ENCODE measurements at regions of chr18 and their contacts with region 1.

Region 1: GRCh38 chr18:623761-624620 is 27.2 kb downstream of the CLUL1 start:
- DNase-seq: peak; percentile 85
- ATAC-seq: peak; percentile 99
- H3K4me3 ChIP-seq: no peak overlapping the region
- H3K27ac ChIP-seq: no peak overlapping the region
- H3K4me1 ChIP-seq: no peaks in the 10 kb centered on the region
- H3K27me3 ChIP-seq: peaks cover 23% of the 10 kb centered on the region; the same call in 1 of the 2 replicates
- CTCF ChIP-seq: peak; percentile 62

Region 2: DNA sequence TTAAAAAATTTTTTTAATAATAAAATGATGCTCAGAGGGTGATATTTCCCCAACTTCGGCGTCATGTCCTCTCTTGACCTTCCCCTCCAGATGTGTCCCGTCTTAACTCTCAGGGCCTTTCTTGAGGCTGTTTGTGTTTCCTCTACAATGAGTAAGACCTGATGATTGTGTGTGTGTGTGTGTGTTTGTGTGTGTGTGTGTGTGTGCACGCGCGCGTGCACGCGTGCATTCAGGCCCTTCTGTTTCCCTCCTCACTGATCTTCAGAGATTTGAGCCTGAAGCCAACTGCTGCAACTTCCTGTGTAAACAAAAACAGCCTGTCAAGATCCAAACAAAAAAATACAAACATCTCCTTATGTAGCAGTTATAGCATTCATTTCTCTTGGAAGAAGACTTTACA is 67.9 kb before region 1 on chr18:
- CTCF ChIA-PET with region 1: no interaction called
- POLR2A ChIA-PET with region 1: no interaction called
- intact Hi-C with region 1: no loop called
- DNase-seq: no peak
- ATAC-seq: no peak
- H3K4me3 ChIP-seq: no peak overlapping the region
- H3K27ac ChIP-seq: no peak overlapping the region
- H3K4me1 ChIP-seq: no peaks in the 10 kb centered on the region
- H3K27me3 ChIP-seq: peaks cover 21% of the 10 kb centered on the region; the same call in 1 of the 2 replicates
- CTCF ChIP-seq: no peak

Region 3: GRCh38 chr18:652131-652530 is 28.1 kb after region 1 on chr18:
- CTCF ChIA-PET with region 1: interaction called, 12 read pairs
- POLR2A ChIA-PET with region 1: interaction called, 4 read pairs
- intact Hi-C with region 1: loop called (anchors 2 kb)
- DNase-seq: no peak
- ATAC-seq: no peak
- H3K4me3 ChIP-seq: no peak overlapping the region
- H3K27ac ChIP-seq: no peak overlapping the region
- H3K4me1 ChIP-seq: peaks cover 25% of the 10 kb centered on the region
- H3K27me3 ChIP-seq: no peaks in the 10 kb centered on the region
- CTCF ChIP-seq: no peak

Region 4: GRCh38 chr18:703213-703967 is 79.4 kb after region 1 on chr18:
- CTCF ChIA-PET with region 1: interaction called, 13 read pairs
- POLR2A ChIA-PET with region 1: no interaction called
- intact Hi-C with region 1: no loop called
- DNase-seq: peak; percentile 92
- ATAC-seq: peak; percentile 93
- H3K4me3 ChIP-seq: peak overlapping the region; percentile 53
- H3K27ac ChIP-seq: peak overlapping the region; percentile 99
- H3K4me1 ChIP-seq: peaks cover 42% of the 10 kb centered on the region
- H3K27me3 ChIP-seq: no peaks in the 10 kb centered on the region
- CTCF ChIP-seq: no peak

Region 5: DNA sequence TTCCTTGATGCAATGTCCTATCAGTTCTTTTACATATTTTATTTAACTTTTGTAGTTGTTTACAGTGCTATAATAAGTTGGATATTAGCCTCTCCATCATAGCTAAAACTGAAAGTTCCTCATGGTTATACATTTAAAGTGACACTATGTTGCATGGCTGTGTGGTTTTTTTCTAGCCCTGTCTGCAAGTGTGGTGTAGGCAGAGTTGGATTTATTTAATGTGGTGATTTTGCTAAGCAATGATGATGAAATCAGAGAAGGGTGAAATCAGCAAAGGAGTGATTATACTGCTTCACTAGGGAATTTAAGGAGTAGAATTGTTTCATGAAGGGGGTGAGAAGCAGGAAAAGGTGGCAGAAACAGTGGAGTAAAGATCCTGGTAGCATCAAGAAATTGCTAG is 106.7 kb after region 1 on chr18:
- CTCF ChIA-PET with region 1: no interaction called
- POLR2A ChIA-PET with region 1: no interaction called
- intact Hi-C with region 1: loop called (anchors 1 kb)
- DNase-seq: no peak
- ATAC-seq: no peak
- H3K4me3 ChIP-seq: no peak overlapping the region
- H3K27ac ChIP-seq: no peak overlapping the region
- H3K4me1 ChIP-seq: no peaks in the 10 kb centered on the region
- H3K27me3 ChIP-seq: no peaks in the 10 kb centered on the region
- CTCF ChIP-seq: no peak

Region 6: GRCh38 chr18:839224-840022 is 215.4 kb after region 1 on chr18:
- CTCF ChIA-PET with region 1: interaction called, 23 read pairs
- POLR2A ChIA-PET with region 1: no interaction called
- intact Hi-C with region 1: loop called (anchors 1 kb)
- DNase-seq: peak; percentile 93
- ATAC-seq: peak; percentile 92
- H3K4me3 ChIP-seq: no peak overlapping the region
- H3K27ac ChIP-seq: no peak overlapping the region
- H3K4me1 ChIP-seq: peaks cover 11% of the 10 kb centered on the region
- H3K27me3 ChIP-seq: no peaks in the 10 kb centered on the region
- CTCF ChIP-seq: peak; percentile 97

Region 7: GRCh38 chr18:923141-923866 is 299.3 kb after region 1 on chr18:
- CTCF ChIA-PET with region 1: no interaction called
- POLR2A ChIA-PET with region 1: no interaction called
- intact Hi-C with region 1: no loop called
- DNase-seq: no peak
- ATAC-seq: no peak
- H3K4me3 ChIP-seq: no peak overlapping the region
- H3K27ac ChIP-seq: no peak overlapping the region
- H3K4me1 ChIP-seq: no peaks in the 10 kb centered on the region
- H3K27me3 ChIP-seq: peaks cover 33% of the 10 kb centered on the region
- CTCF ChIP-seq: no peak